ENCODE measurements at regions of chrX and their contacts with region 1.

Region 1: DNA sequence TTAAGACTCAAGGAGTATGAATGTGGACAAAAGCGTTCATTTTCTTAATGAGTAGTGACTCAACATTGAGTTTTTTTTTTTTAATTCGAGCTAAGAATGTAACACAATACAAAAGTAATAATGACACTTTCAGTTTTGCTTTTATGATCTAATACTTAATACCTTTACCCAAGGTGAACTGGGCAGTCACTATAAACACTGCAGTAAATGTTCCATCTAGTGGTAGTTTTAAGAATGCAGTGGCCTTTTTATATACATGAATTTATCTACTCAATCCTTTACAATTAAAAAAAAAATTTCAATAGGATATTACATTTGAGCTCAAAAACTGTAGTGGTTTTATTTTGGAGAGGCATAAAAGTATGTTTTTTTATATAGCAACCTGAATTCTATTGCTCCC is 33.9 kb downstream of the PDK3 start:
- DNase-seq: peak in 4 of 9 donors; percentile 18 to 40 (median 36)
- ATAC-seq: peak; percentile 77
- H3K4me3 ChIP-seq: no peak overlapping the region
- H3K4me3 Mint-ChIP-seq: peak overlapping the region in 4 of 10 donors; percentile 25 to 48 (median 42)
- H3K27ac ChIP-seq: no peak overlapping the region
- H3K27ac Mint-ChIP-seq: peak overlapping the region in 4 of 9 donors; percentile 16 to 61 (median 44)
- H3K4me1 ChIP-seq: peaks cover 7 to 8% of the 10 kb centered on the region in 2 donors
- H3K4me1 Mint-ChIP-seq: peaks cover 0 to 33% (median 23%) of the 10 kb centered on the region in 7 donors
- H3K27me3 ChIP-seq: no peaks in the 10 kb centered on the region
- H3K27me3 Mint-ChIP-seq: no peaks in the 10 kb centered on the region

Region 2: DNA sequence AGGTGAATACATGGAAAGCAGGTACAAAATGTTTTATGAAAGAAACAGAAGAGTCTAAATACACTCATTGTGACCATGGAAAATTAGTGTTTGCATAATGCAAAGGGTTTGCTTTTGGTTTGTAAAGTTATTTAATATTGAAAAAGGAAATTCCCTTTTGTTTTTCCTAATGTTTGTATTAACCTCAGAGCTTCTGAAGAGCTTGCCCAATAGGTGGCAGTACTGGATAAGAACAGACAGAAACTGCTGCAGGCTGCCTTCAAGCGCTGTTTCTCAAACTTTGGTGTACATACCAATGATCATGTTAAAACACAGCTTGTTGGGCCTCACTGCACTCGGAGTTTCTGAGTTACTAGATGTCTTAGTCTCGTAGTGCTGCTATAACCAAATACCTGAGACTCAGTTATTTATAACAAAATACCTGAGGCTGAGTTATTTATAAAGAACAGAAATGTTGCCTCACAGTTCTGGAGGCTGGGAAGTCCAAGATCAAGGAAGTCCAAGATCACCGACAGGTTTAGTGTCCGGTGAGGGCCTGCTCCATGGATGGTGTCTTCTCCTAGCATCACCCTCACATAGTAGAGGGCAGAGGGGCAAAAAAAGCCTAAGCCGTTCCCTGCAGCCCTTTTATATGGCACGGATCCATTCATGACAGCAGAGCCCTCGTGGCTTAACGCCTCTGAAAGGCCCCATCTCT is 239.3 kb before region 1 on chrX:
- CTCF ChIA-PET with region 1: no interaction called
- POLR2A ChIA-PET with region 1: no interaction called
- intact Hi-C with region 1: loop called in 1 of 2 experiments (anchors 5 kb)
- DNase-seq: peak in 5 of 9 donors; percentile 3 to 39 (median 6)
- ATAC-seq: peak; percentile 29
- H3K4me3 ChIP-seq: no peak overlapping the region
- H3K4me3 Mint-ChIP-seq: no peak overlapping the region
- H3K27ac ChIP-seq: no peak overlapping the region
- H3K27ac Mint-ChIP-seq: no peak overlapping the region
- H3K4me1 ChIP-seq: no peaks in the 10 kb centered on the region
- H3K4me1 Mint-ChIP-seq: peaks cover 9 to 27% (median 15%) of the 10 kb centered on the region in 7 donors
- H3K27me3 ChIP-seq: no peaks in the 10 kb centered on the region
- H3K27me3 Mint-ChIP-seq: peaks cover 0 to 2% (median 0%) of the 10 kb centered on the region in 5 donors

Region 3: DNA sequence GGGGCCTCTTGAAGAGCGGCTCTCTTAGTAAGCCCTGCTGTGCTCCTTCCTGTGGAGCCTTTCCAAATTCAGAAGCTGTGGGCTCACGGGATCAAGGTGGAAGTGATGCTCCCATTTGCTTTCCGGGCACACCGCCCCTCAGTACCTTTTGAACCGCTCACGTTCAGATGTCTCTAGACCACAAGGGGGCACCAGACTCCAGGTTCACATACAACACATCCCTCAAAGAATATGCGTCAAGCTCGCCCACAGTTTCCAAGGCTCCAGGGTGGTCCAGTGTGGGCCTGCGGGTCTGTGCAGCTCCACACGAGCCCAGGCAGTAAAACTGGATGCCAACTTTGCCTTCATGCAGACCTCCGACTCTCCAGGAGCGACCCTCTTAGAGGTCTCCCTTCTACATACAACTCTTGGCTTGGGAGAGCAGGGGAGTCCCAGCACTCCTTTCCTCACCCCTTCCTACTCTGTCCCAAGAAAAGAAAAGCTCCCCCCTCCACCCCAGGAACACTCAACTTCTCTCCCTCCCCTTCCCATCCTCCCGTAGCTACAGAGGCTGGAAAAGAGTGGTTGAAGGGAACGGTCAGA is 127.5 kb before region 1 on chrX:
- CTCF ChIA-PET with region 1: interaction called, 17 read pairs
- POLR2A ChIA-PET with region 1: no interaction called
- intact Hi-C with region 1: loop called (anchors 1 kb)
- DNase-seq: peak; percentile 15 to 60 (median 44)
- ATAC-seq: peak; percentile 79
- H3K4me3 ChIP-seq: no peak overlapping the region
- H3K4me3 Mint-ChIP-seq: peak overlapping the region; percentile 8 to 82 (median 52)
- H3K27ac ChIP-seq: no peak overlapping the region
- H3K27ac Mint-ChIP-seq: peak overlapping the region in 1 of 9 donors; percentile 83
- H3K4me1 ChIP-seq: no peaks in the 10 kb centered on the region
- H3K4me1 Mint-ChIP-seq: peaks cover 5 to 30% (median 9%) of the 10 kb centered on the region in 7 donors
- H3K27me3 ChIP-seq: no peaks in the 10 kb centered on the region
- H3K27me3 Mint-ChIP-seq: peaks cover 0 to 4% (median 0%) of the 10 kb centered on the region in 5 donors

Region 4: DNA sequence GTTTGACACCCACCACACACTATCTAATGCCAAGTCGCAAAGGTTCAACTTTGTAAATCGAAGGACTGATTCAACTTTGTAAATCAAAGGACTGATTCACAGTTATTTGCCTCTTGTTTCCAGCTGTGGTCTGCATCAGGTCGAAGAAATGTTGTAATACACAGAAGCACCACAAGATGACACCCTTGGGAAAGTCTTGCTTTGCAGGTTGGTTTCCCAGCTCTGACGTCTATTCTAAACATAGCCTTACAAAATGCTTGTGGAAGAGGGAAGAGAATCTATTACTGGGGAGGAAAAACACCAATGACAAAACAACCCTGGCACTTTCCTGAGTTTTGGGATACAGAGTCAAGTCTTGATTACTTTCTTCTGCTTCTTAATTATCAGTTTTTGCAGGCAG is 103.2 kb before region 1 on chrX:
- CTCF ChIA-PET with region 1: interaction called, 154 read pairs
- POLR2A ChIA-PET with region 1: interaction called, 10 read pairs
- intact Hi-C with region 1: loop called (anchors 1 kb)
- DNase-seq: peak in 8 of 9 donors; percentile 20 to 62 (median 50)
- ATAC-seq: peak; percentile 87
- H3K4me3 ChIP-seq: no peak overlapping the region
- H3K4me3 Mint-ChIP-seq: no peak overlapping the region
- H3K27ac ChIP-seq: no peak overlapping the region
- H3K27ac Mint-ChIP-seq: peak overlapping the region in 1 of 9 donors; percentile 51
- H3K4me1 ChIP-seq: no peaks in the 10 kb centered on the region
- H3K4me1 Mint-ChIP-seq: peaks cover 0 to 7% (median 0%) of the 10 kb centered on the region in 7 donors
- H3K27me3 ChIP-seq: no peaks in the 10 kb centered on the region
- H3K27me3 Mint-ChIP-seq: peaks cover 0 to 5% (median 2%) of the 10 kb centered on the region in 5 donors

Region 5: GRCh38 chrX:24464836-24465531 is 34.0 kb before region 1 on chrX and contains the start of gene PDK3:
- CTCF ChIA-PET with region 1: interaction called, 11 read pairs
- POLR2A ChIA-PET with region 1: interaction called, 8 read pairs
- intact Hi-C with region 1: loop called (anchors 1 kb)
- DNase-seq: peak; percentile 81 to 92 (median 89)
- ATAC-seq: peak; percentile 98
- H3K4me3 ChIP-seq: peak within 1 kb of the TSS; percentile 70
- H3K4me3 Mint-ChIP-seq: peak within 1 kb of the TSS; percentile 48 to 90 (median 85)
- H3K27ac ChIP-seq: peak within 1 kb of the TSS; percentile 92
- H3K27ac Mint-ChIP-seq: peak within 1 kb of the TSS; percentile 77 to 97 (median 93)
- H3K4me1 ChIP-seq: peaks cover 14 to 24% of the 10 kb centered on the region in 2 donors
- H3K4me1 Mint-ChIP-seq: peaks cover 7 to 37% (median 33%) of the 10 kb centered on the region in 7 donors
- H3K27me3 ChIP-seq: no peaks in the 10 kb centered on the region
- H3K27me3 Mint-ChIP-seq: no peaks in the 10 kb centered on the region
- total RNA-seq, gene PDK3: 17.4 to 29.4 (median 28.5) TPM

Region 6: DNA sequence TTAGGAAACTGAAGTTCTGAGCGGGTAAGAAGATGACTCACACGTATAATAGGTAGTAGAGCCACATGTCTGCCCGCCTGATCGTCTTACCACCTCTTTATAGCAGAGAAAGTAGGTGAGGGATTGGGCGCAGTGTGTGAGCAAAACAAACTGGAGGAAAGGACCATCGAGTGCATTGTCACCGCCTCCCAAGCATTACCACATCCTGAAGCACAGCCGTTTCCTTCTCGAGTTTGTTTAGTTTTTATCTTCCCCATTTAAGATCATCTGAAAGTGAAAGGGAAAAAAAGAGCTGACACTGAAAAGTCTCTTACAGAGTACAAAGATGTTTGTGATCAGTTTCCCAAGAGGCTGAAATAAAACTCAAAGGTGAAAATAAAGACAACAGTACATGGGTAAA is 19.1 kb before region 1 on chrX:
- CTCF ChIA-PET with region 1: interaction called, 7 read pairs
- POLR2A ChIA-PET with region 1: interaction called, 9 read pairs
- intact Hi-C with region 1: loop called (anchors 1 kb)
- DNase-seq: peak in 8 of 9 donors; percentile 46 to 88 (median 82)
- ATAC-seq: peak; percentile 98
- H3K4me3 ChIP-seq: peak overlapping the region; percentile 34
- H3K4me3 Mint-ChIP-seq: peak overlapping the region; percentile 65 to 85 (median 76)
- H3K27ac ChIP-seq: peak overlapping the region; percentile 81
- H3K27ac Mint-ChIP-seq: peak overlapping the region; percentile 91 to 97 (median 95)
- H3K4me1 ChIP-seq: peaks cover 22 to 51% of the 10 kb centered on the region in 2 donors
- H3K4me1 Mint-ChIP-seq: peaks cover 16 to 92% (median 71%) of the 10 kb centered on the region in 7 donors
- H3K27me3 ChIP-seq: no peaks in the 10 kb centered on the region
- H3K27me3 Mint-ChIP-seq: no peaks in the 10 kb centered on the region

Region 7: GRCh38 chrX:24693453-24694202 is 194.7 kb after region 1 on chrX and contains the start of gene POLA1:
- CTCF ChIA-PET with region 1: no interaction called
- POLR2A ChIA-PET with region 1: no interaction called
- intact Hi-C with region 1: loop called in 1 of 2 experiments (anchors 10 kb)
- DNase-seq: peak; percentile 33 to 81 (median 41)
- ATAC-seq: peak; percentile 97
- H3K4me3 ChIP-seq: peak within 1 kb of the TSS; percentile 78
- H3K4me3 Mint-ChIP-seq: peak within 1 kb of the TSS; percentile 85 to 94 (median 89)
- H3K27ac ChIP-seq: peak within 1 kb of the TSS; percentile 52
- H3K27ac Mint-ChIP-seq: peak within 1 kb of the TSS; percentile 28 to 95 (median 77)
- H3K4me1 ChIP-seq: no peaks in the 10 kb centered on the region
- H3K4me1 Mint-ChIP-seq: peaks cover 0 to 24% (median 13%) of the 10 kb centered on the region in 7 donors
- H3K27me3 ChIP-seq: no peaks in the 10 kb centered on the region
- H3K27me3 Mint-ChIP-seq: no peaks in the 10 kb centered on the region
- total RNA-seq, gene POLA1: 6.4 to 26.6 (median 7.5) TPM

Region 8: GRCh38 chrX:25015486-25016360 is 516.7 kb after region 1 on chrX and contains the start of gene ARX:
- CTCF ChIA-PET with region 1: no interaction called
- POLR2A ChIA-PET with region 1: no interaction called
- intact Hi-C with region 1: no loop called
- DNase-seq: no peak
- ATAC-seq: peak; percentile 36
- H3K4me3 ChIP-seq: no peak within 1 kb of the TSS
- H3K4me3 Mint-ChIP-seq: peak within 1 kb of the TSS in 9 of 10 donors; percentile 6 to 71 (median 47)
- H3K27ac ChIP-seq: no peak within 1 kb of the TSS
- H3K27ac Mint-ChIP-seq: peak within 1 kb of the TSS in 2 of 9 donors; percentile 38 to 67
- H3K4me1 ChIP-seq: peaks cover 0 to 4% of the 10 kb centered on the region in 2 donors
- H3K4me1 Mint-ChIP-seq: peaks cover 0 to 31% (median 20%) of the 10 kb centered on the region in 7 donors
- H3K27me3 ChIP-seq: peaks cover 3 to 7% of the 10 kb centered on the region in 2 donors
- H3K27me3 Mint-ChIP-seq: peaks cover 21 to 80% (median 43%) of the 10 kb centered on the region in 5 donors
- total RNA-seq, gene ARX: not detected

Measured in naive thymus-derived CD4-positive, alpha-beta T cell (primary cell).